Gastrocnemius medialis (tissue), 4 donors: ENCODE measurements at regions of chr12 and their contacts with region 1.

Region 1: DNA sequence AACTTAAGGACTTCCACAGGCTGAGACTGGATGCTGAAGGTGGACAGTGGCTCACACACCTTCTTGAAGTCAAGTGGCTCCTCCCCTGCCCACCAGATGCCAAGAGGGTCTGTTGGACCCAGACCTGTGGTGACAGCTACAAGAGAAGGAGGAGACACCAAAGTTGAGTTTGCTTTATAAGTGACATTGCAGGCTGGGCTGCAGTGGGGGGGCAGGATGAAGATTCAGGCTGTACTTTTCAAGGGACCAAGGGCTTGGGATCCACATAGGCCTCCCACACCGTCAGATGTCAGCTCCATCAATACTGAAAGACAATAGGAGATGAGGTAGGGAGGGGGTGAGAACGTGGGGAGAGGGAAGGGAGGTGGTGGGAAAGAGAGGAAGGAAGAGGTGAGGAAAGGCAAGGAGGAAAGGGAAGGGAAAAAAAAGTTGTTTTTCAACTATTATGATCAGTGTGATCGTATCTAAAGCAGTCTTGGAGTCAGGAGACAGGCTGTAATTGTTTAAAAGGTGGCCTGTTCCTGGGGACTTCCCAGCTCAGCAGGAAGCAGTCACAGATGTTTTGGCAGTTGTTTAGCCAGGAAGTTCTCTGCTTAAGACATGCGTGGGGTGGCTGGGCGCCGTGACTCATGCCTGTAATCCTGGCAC is 84.1 kb upstream of the RESF1 start:
- DNase-seq: peak in 1 of 2 donors; percentile 18
- ATAC-seq: peak; percentile 73 to 78
- H3K4me3 ChIP-seq: no peak overlapping the region
- H3K27ac ChIP-seq: peak overlapping the region; percentile 42 to 72 (median 60)
- H3K4me1 ChIP-seq: peaks cover 0 to 10% of the 10 kb centered on the region in 2 donors
- H3K27me3 ChIP-seq: no peaks in the 10 kb centered on the region
- CTCF ChIP-seq: no peak
- POLR2A ChIP-seq: no peak

Region 2: GRCh38 chr12:31828071-31828470 is 47.0 kb before region 1 on chr12:
- in situ Hi-C with region 1: no loop called
- intact Hi-C with region 1: loop called (anchors 10 kb)
- DNase-seq: no peak
- ATAC-seq: no peak
- H3K4me3 ChIP-seq: no peak overlapping the region
- H3K27ac ChIP-seq: no peak overlapping the region
- H3K4me1 ChIP-seq: no peaks in the 10 kb centered on the region
- H3K27me3 ChIP-seq: no peaks in the 10 kb centered on the region
- CTCF ChIP-seq: no peak
- POLR2A ChIP-seq: no peak